Activated T-helper 1 cell treated with anti-CD3 and anti-CD28 coated beads, Interleukin-12 subunit alpha, Interleukin-12 subunit beta, Interleukin-2, Interleukin-4 antibody, amounts not matched to agents 30 ng/mL and 10 ng/mL and 1 ng/mL, durations not matched to agents 14 hours and 24 hours and 36 hours (primary cell): ENCODE measurements at regions of chr14 and their contacts with region 1.

Region 1: DNA sequence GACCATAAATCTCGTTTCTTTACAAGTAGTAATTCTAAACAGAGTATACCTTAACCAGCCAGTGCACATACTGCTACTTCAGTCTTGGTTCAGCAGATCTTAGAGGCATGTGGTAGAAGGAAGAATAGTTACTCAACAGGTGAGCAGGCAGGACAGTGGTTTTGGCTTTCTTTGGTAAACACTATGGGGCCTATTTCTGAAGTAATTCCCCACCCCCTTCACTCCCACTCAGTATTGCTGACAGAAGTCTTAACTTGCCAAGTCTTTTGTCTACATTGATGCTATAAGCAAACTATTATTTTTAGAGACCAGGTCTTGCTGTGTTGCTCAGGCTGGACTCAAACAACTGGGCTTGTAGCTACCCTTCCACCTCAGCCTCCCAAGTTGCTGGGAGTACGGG is 68.5 kb downstream of the FBXO34 start:
- DNase-seq: no peak
- H3K4me3 Mint-ChIP-seq: peak overlapping the region; percentile 48
- H3K27ac Mint-ChIP-seq: peak overlapping the region; percentile 16
- H3K4me1 Mint-ChIP-seq: peaks cover 85% of the 10 kb centered on the region
- H3K27me3 Mint-ChIP-seq: no peaks in the 10 kb centered on the region

Region 2: GRCh38 chr14:55071870-55072640 is 267.7 kb before region 1 on chr14:
- intact Hi-C with region 1: no loop called
- DNase-seq: no peak
- H3K4me3 Mint-ChIP-seq: no peak overlapping the region
- H3K27ac Mint-ChIP-seq: peak overlapping the region; percentile 61
- H3K4me1 Mint-ChIP-seq: peaks cover 30% of the 10 kb centered on the region
- H3K27me3 Mint-ChIP-seq: no peaks in the 10 kb centered on the region

Region 3: DNA sequence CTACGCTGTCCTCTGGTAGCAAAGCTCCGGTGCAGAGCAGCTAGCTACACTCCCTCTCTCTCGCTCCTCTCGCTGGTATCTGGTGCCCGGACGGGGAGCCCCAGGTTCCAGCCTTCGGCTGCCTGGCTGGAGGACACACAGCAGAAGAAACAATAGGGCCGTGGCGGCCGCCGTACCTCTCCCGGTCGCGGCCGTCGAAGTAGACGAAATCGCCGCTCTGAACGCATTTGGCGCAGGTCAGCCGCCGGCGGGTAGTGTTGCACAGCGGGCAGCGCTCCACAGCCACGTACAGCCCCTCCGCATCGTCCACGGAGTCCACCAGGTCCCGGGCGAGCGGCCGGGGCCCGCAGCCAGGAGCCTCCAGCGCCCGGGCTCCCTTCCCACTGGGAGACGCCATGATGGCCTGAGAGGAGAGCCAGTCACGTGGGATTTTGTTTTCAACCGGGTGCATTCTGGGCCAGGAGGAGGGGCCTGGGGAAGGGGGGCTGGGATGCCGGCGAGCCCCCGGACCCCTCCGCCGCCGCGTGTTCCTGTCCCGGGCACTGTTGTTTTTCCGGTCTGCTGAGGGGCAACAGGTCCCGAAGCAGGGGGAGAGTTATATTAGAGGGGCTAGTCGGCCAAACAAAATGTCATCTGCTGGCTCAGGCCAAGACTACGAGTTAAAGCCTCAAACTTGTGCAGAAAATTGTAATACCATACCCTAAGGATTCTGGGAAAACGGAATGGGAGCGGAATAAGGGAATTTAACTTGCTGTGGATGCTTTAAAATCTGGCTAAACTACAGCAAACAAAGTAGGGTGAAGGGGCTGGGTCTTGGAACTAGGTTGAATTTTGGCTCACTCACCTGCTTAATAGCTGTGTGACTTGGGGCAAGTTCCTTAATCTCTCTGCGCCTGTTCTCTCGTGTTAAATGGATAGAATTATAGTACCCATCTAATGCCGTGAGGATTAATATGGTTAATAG is 71.9 kb after region 1 on chr14 and contains the start of gene ATG14:
- intact Hi-C with region 1: loop called (anchors 5 kb)
- DNase-seq: peak; percentile 70
- H3K4me3 Mint-ChIP-seq: peak within 1 kb of the TSS; percentile 89
- H3K27ac Mint-ChIP-seq: peak within 1 kb of the TSS; percentile 85
- H3K4me1 Mint-ChIP-seq: peaks cover 29% of the 10 kb centered on the region
- H3K27me3 Mint-ChIP-seq: no peaks in the 10 kb centered on the region
- total RNA-seq, gene ATG14: 4.8 and 6.2 TPM in 2 replicates